HepG2 (cell line): ENCODE measurements at regions of chr14 and their contacts with region 1.

Region 1: DNA sequence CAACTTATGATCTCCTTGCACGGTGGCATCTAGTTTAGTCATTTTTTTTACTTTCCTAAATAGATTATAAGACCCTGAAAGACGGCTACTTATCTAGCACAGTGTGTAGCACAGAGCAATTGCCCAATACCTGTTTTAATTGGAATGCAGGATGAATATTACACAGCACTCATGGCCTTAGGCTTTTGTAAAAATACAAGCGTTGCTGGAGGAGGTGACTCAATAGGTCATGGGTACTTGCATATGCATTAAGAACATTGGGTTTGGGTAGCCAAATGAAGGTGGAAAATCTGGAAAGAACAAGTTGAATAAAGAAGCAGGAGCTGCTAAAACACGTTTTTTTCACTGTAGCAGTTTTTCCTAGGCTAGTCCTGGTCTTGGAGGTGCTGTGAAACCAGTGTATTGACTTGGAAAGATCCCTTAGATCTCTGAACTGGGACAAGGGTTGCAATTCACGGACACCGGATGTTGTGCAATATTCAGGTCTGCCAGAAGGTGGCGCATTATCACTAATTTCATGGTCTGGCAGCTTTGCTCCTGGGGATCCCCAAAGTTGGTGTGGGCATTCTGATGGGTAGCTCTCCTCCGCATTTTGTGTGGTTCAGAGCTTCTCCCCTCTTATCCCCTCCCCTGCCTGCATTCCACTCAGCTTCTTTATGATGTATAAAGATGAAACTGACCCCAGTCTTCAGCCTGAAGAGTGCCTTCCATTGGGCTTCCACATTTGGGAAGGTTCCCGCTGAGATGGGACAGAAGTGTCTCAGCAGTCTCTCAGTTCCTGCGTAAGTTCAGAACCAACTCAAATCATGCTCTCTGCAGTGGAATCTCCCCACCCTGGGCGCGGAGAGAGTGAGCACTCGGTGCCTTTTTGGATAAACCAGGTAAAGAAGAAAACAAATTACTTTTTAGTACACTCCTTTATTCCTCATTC is 278.3 kb downstream of the NRXN3 start:
- DNase-seq: peak; percentile 15
- ATAC-seq: no peak; the same call in none of the 3 replicates
- H3K4me3 ChIP-seq: no peak overlapping the region
- H3K27ac ChIP-seq: no peak overlapping the region
- H3K4me1 ChIP-seq: no peaks in the 10 kb centered on the region
- H3K27me3 ChIP-seq: no peaks in the 10 kb centered on the region
- CTCF ChIP-seq: peak; percentile 69
- EP300 ChIP-seq: no peak
- POLR2A ChIP-seq: no peak
- RAD21 ChIP-seq: no peak

Region 2: DNA sequence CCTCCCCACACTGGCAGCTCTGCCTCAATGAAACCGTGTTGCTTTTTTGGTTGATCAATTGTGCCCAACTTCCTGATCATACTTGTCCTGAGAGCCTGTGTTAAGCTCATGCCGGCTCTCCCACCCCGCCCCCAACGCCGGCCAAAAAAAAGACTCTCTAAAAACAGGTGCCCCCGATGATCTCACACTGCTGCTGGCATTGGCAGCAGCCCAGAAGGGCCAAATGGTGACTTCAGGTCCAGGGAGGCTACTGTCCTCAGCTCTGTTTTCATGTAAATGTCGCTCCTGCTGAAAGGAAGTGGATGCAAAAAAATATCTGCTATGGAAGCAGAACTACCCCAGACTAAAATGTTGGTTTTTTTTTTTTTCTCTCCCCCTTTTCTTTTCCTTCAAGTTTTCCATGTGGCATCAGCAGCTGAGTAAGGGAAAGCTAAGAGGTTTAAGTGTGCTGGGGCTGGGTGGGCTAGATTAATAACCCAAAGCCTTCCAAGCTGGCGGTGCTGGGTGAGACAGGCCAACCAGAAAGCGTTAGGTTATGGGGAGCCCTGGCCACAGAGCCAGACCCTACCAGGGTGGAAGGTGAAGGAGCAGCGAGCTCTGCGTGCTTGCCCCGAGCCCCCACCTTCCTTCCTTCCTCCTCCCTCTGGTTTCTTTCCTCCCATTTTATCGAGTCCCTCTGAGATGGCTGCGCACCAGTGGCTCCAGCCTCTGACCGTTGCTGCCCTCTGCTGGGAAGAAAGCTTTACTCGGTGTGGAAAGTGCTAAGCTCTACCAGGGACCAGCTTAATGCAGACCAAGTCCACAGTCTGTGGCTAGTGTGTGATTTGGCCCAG is 117.8 kb after region 1 on chr14:
- CTCF ChIA-PET with region 1: interaction called, 3 read pairs
- POLR2A ChIA-PET with region 1: no interaction called
- in situ Hi-C with region 1: no loop called
- intact Hi-C with region 1: loop called (anchors 1 kb)
- DNase-seq: peak; percentile 34
- ATAC-seq: peak; percentile 99
- H3K4me3 ChIP-seq: no peak overlapping the region
- H3K27ac ChIP-seq: no peak overlapping the region
- H3K4me1 ChIP-seq: no peaks in the 10 kb centered on the region
- H3K27me3 ChIP-seq: no peaks in the 10 kb centered on the region
- CTCF ChIP-seq: peak; percentile 83
- EP300 ChIP-seq: no peak
- POLR2A ChIP-seq: no peak
- RAD21 ChIP-seq: peak; percentile 60

Region 3: DNA sequence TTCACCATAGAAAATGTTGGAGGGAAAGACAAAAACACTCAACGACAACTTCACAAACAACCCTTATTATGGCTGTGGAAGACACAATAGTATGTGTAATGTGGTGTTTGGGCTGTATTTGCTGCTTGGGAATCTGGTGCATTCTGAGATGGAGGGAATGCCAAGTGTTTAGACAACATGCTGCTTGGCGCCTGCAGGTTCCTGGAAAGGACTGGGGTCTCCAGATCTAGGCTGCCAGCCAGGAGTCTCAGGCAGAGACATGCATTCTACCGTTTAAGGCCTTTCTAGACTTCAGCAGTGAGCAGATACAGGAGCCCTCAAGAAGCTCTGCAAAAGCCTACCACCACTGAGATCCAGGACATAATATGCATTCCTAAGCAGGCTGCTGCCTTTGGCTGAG is 140.5 kb after region 1 on chr14:
- CTCF ChIA-PET with region 1: no interaction called
- POLR2A ChIA-PET with region 1: no interaction called
- in situ Hi-C with region 1: no loop called
- intact Hi-C with region 1: no loop called
- DNase-seq: no peak
- ATAC-seq: no peak
- H3K4me3 ChIP-seq: no peak overlapping the region
- H3K27ac ChIP-seq: no peak overlapping the region
- H3K4me1 ChIP-seq: no peaks in the 10 kb centered on the region
- H3K27me3 ChIP-seq: no peaks in the 10 kb centered on the region
- CTCF ChIP-seq: no peak
- EP300 ChIP-seq: no peak
- POLR2A ChIP-seq: no peak
- RAD21 ChIP-seq: no peak